Endothelial cell of umbilical vein (primary cell): ENCODE measurements at regions of chr10 and their contacts with region 1.

Region 1: DNA sequence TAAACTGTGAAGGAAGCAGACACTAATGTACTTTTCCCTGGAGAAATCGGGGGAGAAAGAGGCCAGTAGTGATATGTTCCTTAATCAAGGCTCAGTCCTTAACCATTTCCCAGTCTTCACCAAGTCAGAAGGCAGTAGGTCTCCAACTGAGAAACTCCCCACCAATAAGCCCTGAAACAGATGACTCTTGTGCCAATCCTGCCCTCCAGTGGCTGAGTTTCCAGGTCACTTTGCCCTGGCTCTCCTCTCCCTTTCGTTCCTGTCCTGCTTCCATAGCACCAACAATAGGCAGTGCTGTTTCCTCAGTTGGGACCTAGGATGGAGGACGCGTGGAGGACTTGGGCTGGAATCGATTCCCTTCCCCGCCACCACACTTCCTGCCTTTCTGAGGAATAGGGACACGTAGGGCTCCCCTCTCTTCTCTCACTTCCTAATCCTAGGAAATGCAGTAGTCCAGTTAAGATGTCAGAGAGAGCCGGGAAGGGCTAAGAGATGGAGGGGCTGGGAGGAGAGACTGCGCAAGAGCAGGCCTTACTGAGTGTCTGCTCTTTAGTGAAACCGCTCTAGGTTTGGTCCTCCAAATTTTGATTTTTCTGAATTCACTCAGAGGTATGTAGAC is 23.4 kb downstream of the ATOH7 start:
- DNase-seq: peak; percentile 82
- H3K4me3 ChIP-seq: no peak overlapping the region
- H3K27ac ChIP-seq: no peak overlapping the region
- H3K4me1 ChIP-seq: no peaks in the 10 kb centered on the region
- H3K27me3 ChIP-seq: peaks cover 5 to 10% of the 10 kb centered on the region in 2 experiments
- CTCF ChIP-seq: peak; percentile 70 to 75
- POLR2A ChIP-seq: no peak

Region 2: DNA sequence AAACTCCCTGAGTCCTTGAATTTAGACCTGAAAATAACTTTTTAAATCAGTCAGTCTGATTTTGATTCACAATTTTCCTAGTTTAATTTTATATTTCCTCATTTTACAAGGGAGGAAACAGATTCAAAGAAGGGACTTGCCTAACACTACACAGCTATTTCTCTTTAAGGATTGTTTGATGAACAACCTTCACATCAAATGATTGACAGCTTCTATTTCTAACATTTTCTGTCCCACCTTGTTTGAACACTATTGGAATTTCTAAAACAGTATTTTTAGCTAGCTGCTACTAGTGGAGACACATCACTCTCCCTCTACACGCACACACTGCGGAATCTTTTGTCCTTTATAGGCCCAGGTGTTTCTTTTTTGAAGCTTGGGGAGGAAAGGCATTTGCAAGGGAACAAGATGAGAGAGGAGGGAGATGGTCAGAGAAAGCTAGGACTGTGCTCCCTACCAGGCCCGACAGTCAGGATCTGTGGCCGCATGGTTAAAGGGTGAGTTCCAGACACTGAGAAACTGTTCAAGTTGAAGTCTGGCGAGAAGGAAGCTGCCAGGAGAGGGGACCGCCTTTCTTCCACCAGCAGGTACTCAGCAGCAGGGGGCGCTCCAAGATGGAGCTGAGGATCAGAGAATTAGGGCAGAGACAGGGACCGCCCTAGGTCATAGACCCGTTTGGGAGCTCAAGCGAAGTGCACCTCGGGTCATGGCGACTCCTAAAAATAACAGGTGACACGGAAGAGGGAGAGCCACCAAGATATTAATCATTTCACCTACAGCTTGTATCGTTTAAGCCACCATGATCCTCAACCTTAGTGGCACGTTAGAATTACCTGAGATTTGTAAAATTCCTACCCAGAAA is 420.3 kb before region 1 on chr10:
- CTCF ChIA-PET with region 1: interaction called, 18 read pairs
- POLR2A ChIA-PET with region 1: no interaction called
- dilution Hi-C with region 1: no loop called
- intact Hi-C with region 1: loop called (anchors 1 kb)
- DNase-seq: peak; percentile 26
- H3K4me3 ChIP-seq: no peak overlapping the region
- H3K27ac ChIP-seq: no peak overlapping the region
- H3K4me1 ChIP-seq: no peaks in the 10 kb centered on the region
- H3K27me3 ChIP-seq: peaks cover 0 to 5% of the 10 kb centered on the region in 2 experiments
- CTCF ChIP-seq: peak; percentile 72 to 77
- POLR2A ChIP-seq: no peak

Region 3: DNA sequence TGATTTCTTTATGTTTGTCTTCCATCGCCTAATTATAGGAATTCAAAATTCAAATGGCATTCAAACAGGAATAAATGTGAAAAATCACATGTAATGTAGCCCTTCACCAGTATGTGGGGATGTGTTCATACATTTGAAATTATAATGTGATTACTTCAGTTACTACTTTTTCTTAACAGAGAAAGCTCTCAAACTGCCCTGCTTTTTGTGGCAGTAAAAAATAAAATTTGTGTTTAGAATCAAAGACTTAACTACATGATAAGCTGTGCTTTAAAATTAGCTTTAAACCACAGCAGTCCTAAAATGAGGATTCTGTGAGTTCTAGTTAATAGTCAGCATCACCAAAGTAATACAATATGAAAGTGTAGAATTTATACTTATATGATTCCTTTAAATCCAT is 125.7 kb before region 1 on chr10:
- CTCF ChIA-PET with region 1: interaction called, 26 read pairs
- POLR2A ChIA-PET with region 1: no interaction called
- dilution Hi-C with region 1: no loop called
- intact Hi-C with region 1: loop called (anchors 1 kb)
- DNase-seq: peak; percentile 52
- H3K4me3 ChIP-seq: no peak overlapping the region
- H3K27ac ChIP-seq: no peak overlapping the region
- H3K4me1 ChIP-seq: peaks cover 6% of the 10 kb centered on the region
- H3K27me3 ChIP-seq: no peaks in the 10 kb centered on the region
- CTCF ChIP-seq: peak in 1 of 2 donors; percentile 22
- POLR2A ChIP-seq: no peak

Region 4: DNA sequence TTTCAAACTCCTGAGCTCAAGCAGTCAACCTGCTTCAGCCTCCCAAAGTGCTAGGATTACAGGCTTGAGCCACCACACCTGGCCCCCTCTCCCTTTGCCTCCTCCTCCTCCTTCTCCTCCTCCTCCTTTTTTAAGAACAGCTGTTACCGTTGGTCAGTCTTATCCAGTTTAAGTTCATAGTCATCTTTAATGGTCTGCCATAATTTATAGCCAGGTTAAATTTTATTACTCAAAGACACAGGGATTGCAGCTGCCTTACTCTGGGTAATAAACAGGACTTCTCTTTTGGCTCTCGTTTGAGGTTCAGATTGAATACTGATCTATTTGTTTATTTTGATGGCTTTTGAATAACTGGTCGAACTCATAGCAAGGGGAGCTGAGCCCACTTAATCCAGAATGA is 11.8 kb before region 1 on chr10:
- CTCF ChIA-PET with region 1: interaction called, 20 read pairs
- POLR2A ChIA-PET with region 1: no interaction called
- dilution Hi-C with region 1: no loop called
- intact Hi-C with region 1: no loop called
- DNase-seq: no peak
- H3K4me3 ChIP-seq: no peak overlapping the region
- H3K27ac ChIP-seq: no peak overlapping the region
- H3K4me1 ChIP-seq: no peaks in the 10 kb centered on the region
- H3K27me3 ChIP-seq: peaks cover 2 to 3% of the 10 kb centered on the region in 2 experiments
- CTCF ChIP-seq: no peak
- POLR2A ChIP-seq: no peak

Region 5: DNA sequence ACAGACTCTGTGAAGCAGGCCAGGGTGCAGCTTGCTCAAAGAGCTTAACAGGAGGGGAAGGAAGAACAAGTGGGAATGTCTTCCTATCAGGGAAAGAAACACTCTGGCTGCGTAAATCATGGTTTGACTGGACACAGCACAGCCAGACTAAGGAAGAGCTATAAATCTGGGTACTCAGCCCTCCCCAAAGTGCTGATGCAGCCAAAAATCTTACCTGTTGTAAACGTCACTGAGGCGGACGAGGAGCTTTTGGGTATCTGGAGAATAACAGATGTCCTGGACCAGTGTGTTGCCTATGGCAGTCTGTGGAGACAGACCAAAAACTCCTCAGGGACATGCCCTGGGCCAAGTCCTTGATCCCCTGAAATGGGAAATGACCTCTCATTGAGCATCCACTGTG is 80.2 kb after region 1 on chr10:
- CTCF ChIA-PET with region 1: interaction called, 13 read pairs
- POLR2A ChIA-PET with region 1: no interaction called
- dilution Hi-C with region 1: no loop called
- intact Hi-C with region 1: no loop called
- DNase-seq: no peak
- H3K4me3 ChIP-seq: no peak overlapping the region
- H3K27ac ChIP-seq: no peak overlapping the region
- H3K4me1 ChIP-seq: no peaks in the 10 kb centered on the region
- H3K27me3 ChIP-seq: no peaks in the 10 kb centered on the region
- CTCF ChIP-seq: no peak
- POLR2A ChIP-seq: no peak

Region 6: DNA sequence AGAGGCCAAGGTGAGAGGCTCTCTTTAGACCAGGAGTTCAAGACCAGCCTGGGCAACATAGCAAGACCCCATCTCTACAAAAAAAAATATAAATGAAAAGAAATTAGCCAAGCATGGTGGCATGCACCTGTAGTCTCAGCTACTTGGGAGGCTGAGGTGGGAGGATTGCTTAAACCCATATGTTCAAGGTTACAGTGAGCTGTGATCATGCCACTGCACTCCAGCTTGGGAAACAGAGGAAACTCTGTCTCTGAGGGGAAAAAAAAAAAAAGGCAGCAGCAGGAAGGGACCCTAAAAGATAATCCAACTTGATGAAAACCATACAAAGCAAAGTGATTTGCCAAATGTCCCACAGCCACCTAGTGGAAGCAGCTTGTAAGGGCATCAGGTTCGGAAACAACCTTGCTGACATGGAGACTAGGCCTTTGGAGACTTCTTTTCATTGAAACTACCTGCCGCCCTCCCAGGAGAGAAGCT is 139.8 kb after region 1 on chr10:
- CTCF ChIA-PET with region 1: interaction called, 38 read pairs
- POLR2A ChIA-PET with region 1: no interaction called
- dilution Hi-C with region 1: no loop called
- intact Hi-C with region 1: loop called (anchors 1 kb)
- DNase-seq: peak; percentile 52
- H3K4me3 ChIP-seq: no peak overlapping the region
- H3K27ac ChIP-seq: no peak overlapping the region
- H3K4me1 ChIP-seq: peaks cover 1% of the 10 kb centered on the region
- H3K27me3 ChIP-seq: no peaks in the 10 kb centered on the region
- CTCF ChIP-seq: peak; percentile 62 to 81
- POLR2A ChIP-seq: no peak